ENCODE measurements at regions of chr9 and their contacts with region 1.

Region 1: DNA sequence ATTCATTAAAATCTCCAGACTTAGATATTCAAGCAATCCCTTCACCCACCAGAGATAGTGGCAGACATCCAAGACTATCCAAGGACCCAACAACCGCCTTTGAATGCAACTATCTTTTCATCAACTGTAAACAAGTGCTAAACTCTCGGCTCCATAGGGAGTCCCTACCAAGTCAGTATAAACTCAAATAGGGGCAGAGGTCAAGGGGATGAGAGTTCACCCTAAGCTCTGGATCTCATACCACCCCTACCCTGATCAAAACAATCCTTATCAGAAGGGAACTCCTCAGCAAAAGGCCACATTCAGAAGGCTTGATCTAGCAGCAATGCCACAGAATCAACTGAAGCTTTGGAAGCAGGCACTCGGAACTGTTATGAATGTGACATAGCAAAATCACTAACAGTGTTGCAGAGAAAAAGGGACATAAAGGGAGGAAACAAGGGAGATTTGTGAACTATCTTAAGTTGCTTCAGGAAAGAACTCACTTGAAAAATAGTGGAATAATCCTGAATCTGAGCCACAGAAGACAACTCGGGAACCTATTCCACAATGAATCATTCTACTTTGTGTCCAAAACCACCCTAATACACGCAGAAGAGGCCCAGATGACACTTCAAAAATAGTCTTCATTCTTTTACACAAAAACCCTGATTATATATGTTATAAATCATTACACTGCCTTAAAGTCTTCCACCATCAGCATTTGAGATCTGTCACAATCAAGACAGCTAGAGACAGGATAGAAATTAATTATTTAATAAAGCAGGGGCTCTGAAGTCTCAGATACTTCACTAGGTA is 49.8 kb downstream of the NR6A1 start:
- DNase-seq: no peak
- H3K4me3 ChIP-seq: peak overlapping the region in 1 of 2 experiments; percentile 22; a peak in 1 of 4 replicates
- H3K27ac ChIP-seq: peak overlapping the region; percentile 70 to 91
- H3K4me1 ChIP-seq: peaks cover 10 to 38% of the 10 kb centered on the region in 2 experiments
- H3K27me3 ChIP-seq: no peaks in the 10 kb centered on the region
- CTCF ChIP-seq: no peak
- EP300 ChIP-seq: peak in 1 of 2 experiments; percentile 58; a peak in 2 of 4 replicates
- RAD21 ChIP-seq: no peak

Region 2: GRCh38 chr9:123763910-123764588 is 957.3 kb before region 1 on chr9:
- CTCF ChIA-PET with region 1: no interaction called
- POLR2A ChIA-PET with region 1: no interaction called
- DNase-seq: no peak
- H3K4me3 ChIP-seq: no peak overlapping the region
- H3K27ac ChIP-seq: peak overlapping the region; percentile 40 to 43; a peak in 3 of 4 replicates
- H3K4me1 ChIP-seq: peaks cover 0 to 2% of the 10 kb centered on the region in 2 experiments; a peak in 3 of 4 replicates
- H3K27me3 ChIP-seq: no peaks in the 10 kb centered on the region
- CTCF ChIP-seq: no peak
- EP300 ChIP-seq: peak; percentile 22 to 76; a peak in 1 of 4 replicates
- RAD21 ChIP-seq: no peak

Region 3: GRCh38 chr9:124754289-124754688 is 33.0 kb after region 1 on chr9:
- CTCF ChIA-PET with region 1: interaction called, 10 read pairs
- POLR2A ChIA-PET with region 1: no interaction called
- DNase-seq: peak; percentile 31
- H3K4me3 ChIP-seq: no peak overlapping the region
- H3K27ac ChIP-seq: peak overlapping the region in 1 of 2 experiments; percentile 78; a peak in 2 of 4 replicates
- H3K4me1 ChIP-seq: peaks cover 7 to 56% of the 10 kb centered on the region in 2 experiments
- H3K27me3 ChIP-seq: no peaks in the 10 kb centered on the region
- CTCF ChIP-seq: peak; percentile 74
- EP300 ChIP-seq: no peak
- RAD21 ChIP-seq: peak; percentile 72